Sciatic nerve (tissue), 2 donors: ENCODE measurements at regions of chr10 and their contacts with region 1.

Region 1: DNA sequence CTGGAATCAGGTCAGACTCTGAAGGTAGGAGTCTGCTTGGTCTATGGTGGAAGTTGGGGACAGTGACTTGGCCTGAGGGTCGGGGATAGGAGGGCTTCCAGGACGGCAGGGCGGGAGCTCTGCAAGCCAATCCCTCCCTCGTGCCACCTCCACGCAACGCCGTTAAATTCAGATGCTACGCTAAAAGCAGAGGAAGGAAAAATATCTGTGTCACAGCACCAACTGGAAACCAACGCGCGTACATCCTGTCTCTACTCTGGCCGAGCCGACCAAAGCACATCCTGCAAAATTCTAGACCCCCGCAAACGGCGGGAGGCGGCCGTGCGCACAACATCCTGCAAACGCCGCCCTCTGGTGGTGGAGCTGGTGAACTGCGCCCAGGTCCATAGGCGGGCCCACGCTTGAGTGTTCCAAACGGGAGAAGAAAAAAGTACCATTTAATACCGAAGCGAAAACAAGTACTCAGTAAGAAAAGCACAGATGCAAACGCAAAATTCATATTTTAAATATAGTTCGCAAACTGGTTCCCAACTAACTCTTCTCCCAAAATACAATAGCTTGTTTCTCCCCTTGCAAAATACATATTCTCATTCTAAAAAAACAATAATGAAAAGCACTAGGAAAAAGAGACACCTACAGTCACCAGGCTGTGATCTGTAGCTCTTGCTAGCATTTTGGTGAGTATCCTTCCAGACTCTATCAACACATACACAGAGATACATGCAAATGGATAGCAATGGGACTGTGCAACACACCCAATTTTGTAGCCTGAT is 45.7 kb upstream of the HSPA12A start:
- DNase-seq: peak; percentile 92
- ATAC-seq: peak; percentile 86

Region 2: DNA sequence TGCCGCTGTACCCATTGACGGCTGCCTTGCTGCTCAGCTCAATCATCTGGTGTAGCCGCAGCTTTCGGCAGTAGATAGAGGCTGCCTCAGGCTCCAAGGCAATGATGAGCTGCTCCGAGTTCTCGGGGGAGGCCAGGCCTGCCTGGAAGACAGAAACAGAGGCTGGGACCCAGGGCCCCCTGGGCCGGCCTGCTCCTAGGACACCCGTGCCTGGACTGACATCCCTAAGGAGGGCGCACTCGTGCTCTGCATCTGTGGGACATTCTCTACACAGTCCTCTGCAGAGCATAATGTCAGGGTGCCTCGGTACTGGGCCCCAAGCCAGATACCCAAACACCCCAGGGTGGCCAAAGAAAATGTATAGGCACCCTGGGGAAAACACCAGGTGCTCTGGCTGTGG is 104.3 kb before region 1 on chr10:
- intact Hi-C with region 1: loop called (anchors 2 kb)
- DNase-seq: no peak
- ATAC-seq: no peak

Region 3: DNA sequence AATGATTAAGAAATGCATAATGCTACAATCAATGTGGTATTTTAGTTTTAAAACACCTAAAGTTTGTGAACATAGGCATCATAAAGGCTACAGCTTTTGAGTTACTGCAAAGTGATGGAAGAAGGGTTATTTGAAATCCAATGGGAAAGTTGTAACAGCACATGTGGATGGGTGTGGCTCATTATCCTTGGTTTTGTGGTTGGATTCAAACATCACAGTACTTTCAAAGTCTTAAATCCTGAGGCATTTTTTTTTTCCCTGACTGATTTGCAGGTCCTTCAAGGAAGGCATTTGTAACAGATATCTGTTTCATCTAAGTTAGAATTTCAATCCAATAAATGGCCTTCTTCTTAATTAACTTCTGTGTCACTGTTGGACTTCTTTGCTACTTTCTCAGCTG is 226.8 kb after region 1 on chr10:
- intact Hi-C with region 1: no loop called
- DNase-seq: no peak
- ATAC-seq: no peak